Cardiac septum (tissue), 1 donor: ENCODE measurements at regions of chr5 and their contacts with region 1.

Region 1: GRCh38 chr5:135466178-135467050 is 14.3 kb upstream of the TIFAB start:
- DNase-seq: peak; percentile 86

Region 2: DNA sequence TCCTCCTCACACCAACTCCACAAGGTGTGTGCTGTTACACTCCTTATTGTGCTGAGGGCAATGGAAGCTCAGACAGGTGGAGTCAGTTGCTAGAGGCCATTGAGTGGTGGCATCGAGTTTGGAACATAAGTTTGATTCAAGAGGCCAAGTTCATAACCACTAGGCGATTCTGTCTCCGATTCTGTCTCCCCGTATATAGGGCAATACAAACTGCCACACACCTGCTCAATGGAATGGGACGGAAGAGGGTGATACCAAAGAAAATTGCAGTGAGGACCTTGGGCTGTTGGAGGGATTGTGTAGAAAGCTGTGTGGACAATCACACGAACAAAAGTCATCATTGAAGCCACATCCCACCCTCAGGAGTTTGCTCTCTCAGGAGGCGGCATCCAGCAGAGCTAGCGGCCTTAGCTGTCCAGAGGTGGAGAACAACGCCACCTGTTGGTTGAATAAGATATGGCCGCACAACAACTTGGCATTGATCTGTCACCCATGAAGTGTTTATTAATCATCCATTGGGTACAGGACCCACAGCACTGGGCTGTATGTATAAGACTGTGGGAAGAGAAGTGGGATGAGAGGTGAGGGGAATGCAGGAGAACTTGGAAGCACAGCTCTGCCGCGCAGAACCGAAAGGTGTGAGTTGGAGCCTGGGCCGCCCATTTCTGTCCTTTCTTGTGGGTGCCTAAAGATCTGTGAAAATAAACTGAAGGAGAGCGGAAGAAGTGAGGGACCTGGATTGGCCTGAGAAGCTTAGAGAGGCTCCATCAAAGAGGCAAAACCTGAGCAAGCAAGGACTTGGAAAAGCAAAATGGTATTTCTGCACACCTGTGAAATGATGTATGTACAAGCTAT is 85.4 kb after region 1 on chr5:
- intact Hi-C with region 1: loop called (anchors 1 kb)
- DNase-seq: no peak

Region 3: DNA sequence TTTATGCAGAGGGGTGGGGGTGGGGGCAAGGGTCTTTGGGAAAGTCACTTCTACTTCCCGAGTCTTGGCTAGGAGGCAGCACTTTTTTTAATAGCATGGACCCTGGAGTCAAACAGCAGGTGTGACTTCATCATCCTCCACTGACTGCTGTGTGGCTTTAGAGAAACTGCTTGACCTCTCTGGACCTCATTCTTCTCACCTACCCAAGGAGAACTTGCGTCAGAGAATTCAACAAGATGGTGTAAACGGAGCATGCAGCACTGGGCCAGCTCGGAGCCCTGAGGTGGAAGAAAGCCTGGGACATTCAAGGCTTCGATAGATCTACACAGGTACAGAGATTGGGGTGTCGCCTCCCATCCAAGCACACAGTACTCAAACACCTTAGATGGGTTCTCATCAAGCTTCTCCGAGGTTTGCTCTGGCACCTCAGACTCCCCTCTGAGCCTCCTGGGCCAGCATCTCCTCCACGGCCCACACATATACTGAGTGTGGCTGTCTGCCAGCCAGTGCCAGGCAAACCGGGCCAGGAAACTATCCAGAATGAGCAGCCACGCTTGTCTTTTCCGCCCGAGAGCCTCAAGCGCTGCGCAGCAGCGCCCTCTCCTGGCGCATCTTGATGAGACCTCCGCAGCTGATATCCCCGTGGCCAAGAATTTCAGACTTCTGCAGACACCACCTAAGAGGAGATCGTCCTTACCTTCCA is 363.4 kb after region 1 on chr5:
- intact Hi-C with region 1: loop called (anchors 10 kb)
- DNase-seq: no peak